GM12878 (cell line): ENCODE measurements at regions of chr2 and their contacts with region 1.

Region 1: GRCh38 chr2:197191177-197191939 is 119.2 kb downstream of the ANKRD44 start:
- DNase-seq: no peak
- ATAC-seq: peak; percentile 81
- H3K4me3 ChIP-seq: no peak overlapping the region
- H3K27ac ChIP-seq: peak overlapping the region; percentile 17; the same call in 1 of the 2 replicates
- H3K4me1 ChIP-seq: peaks cover 16% of the 10 kb centered on the region; the same call in 1 of the 2 replicates
- H3K27me3 ChIP-seq: no peaks in the 10 kb centered on the region
- CTCF ChIP-seq: peak; percentile 57 to 69 (median 61)
- EP300 ChIP-seq: no peak
- POLR2A ChIP-seq: no peak
- RAD21 ChIP-seq: peak; percentile 91

Region 2: GRCh38 chr2:197145471-197146138 is 45.8 kb before region 1 on chr2:
- CTCF ChIA-PET with region 1: interaction called, 13 read pairs
- POLR2A ChIA-PET with region 1: interaction called, 3 read pairs
- RAD21 ChIA-PET with region 1: no interaction called
- SMC1A ChIA-PET with region 1: interaction called, 3 read pairs
- in situ Hi-C with region 1: no loop called
- intact Hi-C with region 1: no loop called
- DNase-seq: peak; percentile 89
- ATAC-seq: peak; percentile 95
- H3K4me3 ChIP-seq: no peak overlapping the region
- H3K27ac ChIP-seq: peak overlapping the region; percentile 32
- H3K4me1 ChIP-seq: peaks cover 42% of the 10 kb centered on the region
- H3K27me3 ChIP-seq: no peaks in the 10 kb centered on the region
- CTCF ChIP-seq: no peak
- EP300 ChIP-seq: peak; percentile 31 to 69; a peak in 1 of 4 replicates
- POLR2A ChIP-seq: peak; percentile 51; the same call in 1 of the 2 replicates
- RAD21 ChIP-seq: 0 out of 2 replicates have a peak, but pooled peaks have one; percentile 1

Region 3: DNA sequence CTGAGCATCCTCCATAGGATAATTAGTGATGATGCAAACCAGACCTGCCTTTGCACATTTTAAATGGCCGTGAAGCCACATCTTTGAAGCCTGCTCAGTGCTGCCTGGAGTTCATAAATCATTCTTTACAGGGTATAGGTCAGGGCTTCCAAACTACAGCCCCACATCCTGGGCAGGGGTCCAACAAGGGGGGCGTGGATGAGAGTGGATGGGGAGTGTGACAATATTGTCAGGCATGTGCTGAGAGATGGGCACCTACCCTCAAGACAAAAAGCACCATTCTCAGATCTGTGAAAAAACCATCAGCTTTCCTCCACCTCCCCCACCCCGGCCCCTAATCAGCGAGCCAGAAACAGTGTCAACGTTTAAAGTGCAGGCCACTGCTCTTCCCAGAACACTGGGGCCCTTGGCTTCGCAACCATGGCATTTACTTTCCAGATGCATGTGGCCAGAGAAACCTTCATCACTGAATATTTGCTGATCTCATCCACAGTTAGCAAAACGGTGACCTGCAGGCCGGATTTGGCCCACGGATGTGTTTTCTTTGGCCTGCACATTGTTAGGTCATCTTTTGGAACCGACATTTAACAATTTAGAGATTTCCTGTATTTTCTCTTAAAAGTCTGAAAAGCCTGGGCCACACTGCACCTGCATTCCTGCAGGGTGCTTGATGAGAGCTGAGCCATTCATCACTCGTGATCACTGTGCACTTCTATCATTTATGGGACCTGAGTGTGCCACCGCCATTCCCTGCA is 11.4 kb before region 1 on chr2:
- CTCF ChIA-PET with region 1: interaction called, 19 read pairs
- POLR2A ChIA-PET with region 1: interaction called, 4 read pairs
- RAD21 ChIA-PET with region 1: interaction called, 3 read pairs
- SMC1A ChIA-PET with region 1: interaction called, 4 read pairs
- in situ Hi-C with region 1: no loop called
- intact Hi-C with region 1: no loop called
- DNase-seq: no peak
- ATAC-seq: no peak
- H3K4me3 ChIP-seq: no peak overlapping the region
- H3K27ac ChIP-seq: no peak overlapping the region
- H3K4me1 ChIP-seq: no peaks in the 10 kb centered on the region
- H3K27me3 ChIP-seq: no peaks in the 10 kb centered on the region
- CTCF ChIP-seq: no peak
- EP300 ChIP-seq: no peak
- POLR2A ChIP-seq: no peak
- RAD21 ChIP-seq: no peak

Region 4: GRCh38 chr2:197239434-197239833 is 48.1 kb after region 1 on chr2:
- CTCF ChIA-PET with region 1: interaction called, 5 read pairs
- POLR2A ChIA-PET with region 1: interaction called, 4 read pairs
- RAD21 ChIA-PET with region 1: interaction called, 6 read pairs
- SMC1A ChIA-PET with region 1: interaction called, 8 read pairs
- in situ Hi-C with region 1: no loop called
- intact Hi-C with region 1: loop called (anchors 2 kb)
- DNase-seq: no peak
- ATAC-seq: peak; percentile 82
- H3K4me3 ChIP-seq: peak overlapping the region; percentile 56
- H3K27ac ChIP-seq: peak overlapping the region; percentile 77
- H3K4me1 ChIP-seq: peaks cover 49% of the 10 kb centered on the region
- H3K27me3 ChIP-seq: no peaks in the 10 kb centered on the region
- CTCF ChIP-seq: no peak
- EP300 ChIP-seq: no peak
- POLR2A ChIP-seq: no peak
- RAD21 ChIP-seq: no peak

Region 5: DNA sequence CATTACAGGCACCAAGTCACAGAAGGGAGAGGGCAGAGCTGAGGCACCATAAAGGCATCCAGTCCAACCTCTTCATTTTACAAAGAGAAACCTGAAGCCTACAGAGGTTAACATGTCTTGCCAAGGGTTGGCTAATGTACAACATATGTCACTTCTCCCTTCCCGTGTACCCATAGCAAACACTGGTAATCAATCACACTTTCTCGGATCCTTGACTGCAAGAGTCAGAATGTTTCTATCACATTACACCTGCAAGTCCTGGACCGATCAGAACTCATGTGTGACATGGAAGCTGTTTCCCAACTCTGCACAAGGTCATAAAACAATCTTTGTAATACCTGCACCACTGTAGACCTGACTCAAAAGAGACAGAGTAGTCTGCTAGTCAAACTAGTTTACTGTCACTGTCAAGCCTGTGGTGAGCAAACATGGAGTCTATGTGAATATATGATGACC is 113.2 kb after region 1 on chr2:
- CTCF ChIA-PET with region 1: interaction called, 128 read pairs
- POLR2A ChIA-PET with region 1: interaction called, 43 read pairs
- RAD21 ChIA-PET with region 1: interaction called, 210 read pairs
- SMC1A ChIA-PET with region 1: interaction called, 204 read pairs
- in situ Hi-C with region 1: no loop called
- intact Hi-C with region 1: no loop called
- DNase-seq: no peak
- ATAC-seq: peak; percentile 43
- H3K4me3 ChIP-seq: peak overlapping the region; percentile 67
- H3K27ac ChIP-seq: peak overlapping the region; percentile 99
- H3K4me1 ChIP-seq: peaks cover 62% of the 10 kb centered on the region
- H3K27me3 ChIP-seq: no peaks in the 10 kb centered on the region
- CTCF ChIP-seq: no peak
- EP300 ChIP-seq: no peak
- POLR2A ChIP-seq: peak; percentile 34; the same call in 1 of the 2 replicates
- RAD21 ChIP-seq: no peak

Region 6: GRCh38 chr2:197383823-197384222 is 192.5 kb after region 1 on chr2:
- CTCF ChIA-PET with region 1: interaction called, 26 read pairs
- POLR2A ChIA-PET with region 1: no interaction called
- RAD21 ChIA-PET with region 1: interaction called, 10 read pairs
- SMC1A ChIA-PET with region 1: interaction called, 15 read pairs
- in situ Hi-C with region 1: loop called (anchors 5 kb)
- intact Hi-C with region 1: no loop called
- DNase-seq: no peak
- ATAC-seq: peak; percentile 36; the same call in 2 of the 3 replicates
- H3K4me3 ChIP-seq: no peak overlapping the region
- H3K27ac ChIP-seq: no peak overlapping the region
- H3K4me1 ChIP-seq: no peaks in the 10 kb centered on the region
- H3K27me3 ChIP-seq: no peaks in the 10 kb centered on the region; a peak in 1 of 4 replicates
- CTCF ChIP-seq: peak in 2 of 3 experiments; percentile 7 to 18; a peak in 1 of 6 replicates
- EP300 ChIP-seq: no peak
- POLR2A ChIP-seq: no peak
- RAD21 ChIP-seq: 0 out of 2 replicates have a peak, but pooled peaks have one; percentile 9

Region 7: DNA sequence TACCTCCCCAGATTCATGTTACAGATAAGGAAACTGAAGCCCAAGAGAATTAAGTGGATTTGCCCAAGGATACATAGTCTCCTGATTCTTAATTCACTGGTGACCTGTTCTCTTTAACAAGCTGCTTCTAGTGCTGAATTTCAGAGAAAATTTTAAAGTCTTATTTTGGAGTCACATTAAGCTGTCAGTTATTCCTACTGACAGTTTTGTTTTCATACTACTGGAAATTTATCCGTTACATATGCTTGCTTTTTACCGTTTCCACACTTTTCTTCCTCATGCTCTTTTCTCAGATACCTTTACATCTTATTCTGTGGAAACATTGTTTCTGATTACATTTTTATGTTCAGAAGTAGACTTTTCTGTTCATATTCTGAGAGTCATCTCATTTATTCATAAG is 325.8 kb after region 1 on chr2:
- CTCF ChIA-PET with region 1: no interaction called
- POLR2A ChIA-PET with region 1: no interaction called
- RAD21 ChIA-PET with region 1: no interaction called
- SMC1A ChIA-PET with region 1: no interaction called
- in situ Hi-C with region 1: no loop called
- intact Hi-C with region 1: no loop called
- DNase-seq: no peak
- ATAC-seq: no peak
- H3K4me3 ChIP-seq: peak overlapping the region; percentile 99
- H3K27ac ChIP-seq: peak overlapping the region; percentile 95; the same call in 1 of the 2 replicates
- H3K4me1 ChIP-seq: peaks cover 7% of the 10 kb centered on the region
- H3K27me3 ChIP-seq: no peaks in the 10 kb centered on the region
- CTCF ChIP-seq: no peak
- EP300 ChIP-seq: no peak
- POLR2A ChIP-seq: no peak
- RAD21 ChIP-seq: no peak